Activated naive CD8-positive, alpha-beta T cell treated with anti-CD3 and anti-CD28 coated beads, Interleukin-2, amount 10 ng/mL, durations not matched to agents 7 days and 5 days (primary cell): ENCODE measurements at regions of chr2 and their contacts with region 1.

Region 1: GRCh38 chr2:85888684-85889626 is at the start of gene ST3GAL5:
- DNase-seq: peak; percentile 98
- ATAC-seq: peak; percentile 88
- H3K4me3 Mint-ChIP-seq: peak within 1 kb of the TSS; percentile 94
- H3K27ac Mint-ChIP-seq: peak within 1 kb of the TSS; percentile 94
- H3K4me1 Mint-ChIP-seq: peaks cover 67% of the 10 kb centered on the region
- H3K27me3 Mint-ChIP-seq: no peaks in the 10 kb centered on the region
- total RNA-seq, gene ST3GAL5: 59.9 to 62.8 TPM

Region 2: GRCh38 chr2:85826990-85827878 is 61.7 kb before region 1 on chr2:
- POLR2A ChIA-PET with region 1: interaction called, 25 read pairs
- DNase-seq: peak; percentile 89
- ATAC-seq: peak; percentile 94
- H3K4me3 Mint-ChIP-seq: peak overlapping the region; percentile 55
- H3K27ac Mint-ChIP-seq: peak overlapping the region; percentile 93
- H3K4me1 Mint-ChIP-seq: peaks cover 24% of the 10 kb centered on the region
- H3K27me3 Mint-ChIP-seq: peaks cover 28% of the 10 kb centered on the region

Region 3: GRCh38 chr2:85852937-85853498 is 35.9 kb before region 1 on chr2:
- POLR2A ChIA-PET with region 1: interaction called, 57 read pairs
- DNase-seq: peak; percentile 67
- ATAC-seq: peak; percentile 88
- H3K4me3 Mint-ChIP-seq: peak overlapping the region; percentile 85
- H3K27ac Mint-ChIP-seq: peak overlapping the region; percentile 99
- H3K4me1 Mint-ChIP-seq: peaks cover 59% of the 10 kb centered on the region
- H3K27me3 Mint-ChIP-seq: no peaks in the 10 kb centered on the region

Region 4: GRCh38 chr2:85999061-85999831 is 110.3 kb after region 1 on chr2:
- POLR2A ChIA-PET with region 1: interaction called, 27 read pairs
- DNase-seq: peak; percentile 58
- ATAC-seq: peak; percentile 89
- H3K4me3 Mint-ChIP-seq: peak overlapping the region; percentile 74
- H3K27ac Mint-ChIP-seq: peak overlapping the region; percentile 99
- H3K4me1 Mint-ChIP-seq: peaks cover 70% of the 10 kb centered on the region
- H3K27me3 Mint-ChIP-seq: no peaks in the 10 kb centered on the region

Region 5: DNA sequence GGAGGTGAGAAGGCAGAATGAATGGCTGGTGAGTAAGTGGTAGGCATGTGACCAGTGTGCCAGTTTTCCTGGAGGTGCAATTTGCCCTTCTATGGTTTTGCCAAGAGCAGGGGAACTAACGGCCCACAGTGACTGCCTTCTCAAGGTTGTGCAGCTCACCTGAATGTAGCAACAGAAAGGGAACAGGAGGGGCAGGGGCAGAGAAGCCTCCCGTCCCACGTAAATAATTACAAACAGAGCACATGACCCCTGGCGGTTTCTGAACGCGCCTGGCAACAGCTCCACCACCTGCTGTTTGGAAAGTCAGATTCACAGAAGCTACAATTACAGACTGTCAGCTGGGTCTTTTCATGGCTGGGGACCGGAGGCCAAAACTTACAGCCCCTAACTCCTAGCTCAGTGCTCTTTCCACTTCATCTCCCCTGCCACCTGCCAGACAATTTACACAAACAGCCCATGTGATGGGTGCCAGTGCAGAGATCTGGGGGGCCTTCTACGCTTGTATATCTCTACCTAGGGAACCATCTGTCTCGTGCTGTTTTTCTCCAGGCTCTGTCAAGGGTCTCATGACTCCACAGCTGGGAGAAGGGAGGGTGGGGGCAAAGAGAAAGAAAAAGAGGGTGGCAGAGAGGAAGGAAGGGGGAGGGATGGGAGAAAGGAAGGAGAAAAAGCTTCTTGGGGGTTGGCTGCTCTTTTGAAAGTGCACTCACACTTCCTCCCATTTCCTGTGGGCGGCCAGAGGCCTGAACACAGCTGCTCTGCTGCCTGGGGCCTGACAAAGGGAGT is 147.1 kb after region 1 on chr2:
- POLR2A ChIA-PET with region 1: interaction called, 74 read pairs
- DNase-seq: peak; percentile 66
- ATAC-seq: peak; percentile 40
- H3K4me3 Mint-ChIP-seq: peak overlapping the region; percentile 79
- H3K27ac Mint-ChIP-seq: peak overlapping the region; percentile 99
- H3K4me1 Mint-ChIP-seq: peaks cover 67% of the 10 kb centered on the region
- H3K27me3 Mint-ChIP-seq: no peaks in the 10 kb centered on the region

Region 6: DNA sequence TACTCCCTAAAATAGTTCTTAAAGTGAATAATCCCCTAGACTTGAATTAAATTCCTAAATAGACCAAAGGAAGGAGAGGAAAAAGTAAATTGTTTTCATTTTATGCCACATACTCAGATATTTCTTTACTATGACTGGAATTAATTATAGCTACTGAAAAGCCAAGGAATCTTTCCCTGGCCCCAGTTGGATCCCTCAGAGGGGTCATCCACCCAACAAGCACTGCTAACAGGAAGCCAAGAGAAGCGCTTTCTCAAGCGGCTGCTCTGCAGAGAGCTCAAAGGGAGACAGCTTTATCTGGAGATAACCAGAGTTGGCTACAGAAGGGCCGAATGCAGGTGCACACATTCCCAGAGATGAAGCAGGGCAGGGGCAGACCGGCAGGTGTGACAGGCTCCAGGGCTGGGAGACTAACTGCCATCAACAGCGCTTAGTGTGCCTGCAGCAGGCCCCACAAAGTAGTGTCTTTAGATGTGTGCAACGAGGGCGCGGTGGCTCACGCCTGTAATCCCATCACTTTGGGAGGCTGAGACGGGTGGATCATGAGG is 165.7 kb after region 1 on chr2:
- POLR2A ChIA-PET with region 1: no interaction called
- DNase-seq: peak; percentile 18
- ATAC-seq: no peak
- H3K4me3 Mint-ChIP-seq: no peak overlapping the region
- H3K27ac Mint-ChIP-seq: peak overlapping the region; percentile 7
- H3K4me1 Mint-ChIP-seq: no peaks in the 10 kb centered on the region
- H3K27me3 Mint-ChIP-seq: no peaks in the 10 kb centered on the region